ENCODE measurements at regions of chr11 and their contacts with region 1.

Region 1: DNA sequence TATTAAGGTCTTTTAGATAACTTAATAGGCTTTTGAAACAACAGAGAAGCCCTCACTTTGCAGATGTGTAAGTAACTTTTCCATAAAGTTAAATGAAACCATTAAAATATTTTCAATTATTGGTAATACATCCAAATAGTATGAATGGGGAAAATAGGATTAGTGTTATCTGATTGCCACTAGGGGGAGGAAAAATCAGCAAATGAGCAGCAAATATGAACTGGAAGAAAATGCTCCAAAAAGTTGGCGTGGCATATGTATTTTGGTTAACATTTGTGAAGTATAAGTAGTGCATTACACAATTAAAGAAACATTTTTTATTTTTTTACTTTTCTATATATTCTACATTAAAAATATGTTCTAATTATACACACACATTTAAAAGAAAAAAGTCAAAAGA is 259.8 kb upstream of the ANO5 start:
- DNase-seq: no peak
- ATAC-seq: peak in 3 of 4 donors; percentile 46 to 63 (median 48)
- H3K4me3 ChIP-seq: no peak overlapping the region
- H3K27ac ChIP-seq: no peak overlapping the region
- H3K4me1 ChIP-seq: no peaks in the 10 kb centered on the region
- H3K27me3 ChIP-seq: no peaks in the 10 kb centered on the region
- CTCF ChIP-seq: peak; percentile 56 to 66 (median 64)
- POLR2A ChIP-seq: no peak

Region 2: GRCh38 chr11:22130462-22131053 is 197.5 kb after region 1 on chr11:
- intact Hi-C with region 1: loop called in 1 of 2 experiments (anchors 10 kb)
- DNase-seq: no peak
- ATAC-seq: peak; percentile 91 to 96 (median 94)
- H3K4me3 ChIP-seq: no peak overlapping the region
- H3K27ac ChIP-seq: no peak overlapping the region
- H3K4me1 ChIP-seq: no peaks in the 10 kb centered on the region
- H3K27me3 ChIP-seq: no peaks in the 10 kb centered on the region
- CTCF ChIP-seq: peak; percentile 55 to 74 (median 68)
- POLR2A ChIP-seq: no peak

Measured in right lobe of liver (tissue), 6 donors.